Vagina (tissue), 2 donors: ENCODE measurements at regions of chr16 and their contacts with region 1.

Region 1: DNA sequence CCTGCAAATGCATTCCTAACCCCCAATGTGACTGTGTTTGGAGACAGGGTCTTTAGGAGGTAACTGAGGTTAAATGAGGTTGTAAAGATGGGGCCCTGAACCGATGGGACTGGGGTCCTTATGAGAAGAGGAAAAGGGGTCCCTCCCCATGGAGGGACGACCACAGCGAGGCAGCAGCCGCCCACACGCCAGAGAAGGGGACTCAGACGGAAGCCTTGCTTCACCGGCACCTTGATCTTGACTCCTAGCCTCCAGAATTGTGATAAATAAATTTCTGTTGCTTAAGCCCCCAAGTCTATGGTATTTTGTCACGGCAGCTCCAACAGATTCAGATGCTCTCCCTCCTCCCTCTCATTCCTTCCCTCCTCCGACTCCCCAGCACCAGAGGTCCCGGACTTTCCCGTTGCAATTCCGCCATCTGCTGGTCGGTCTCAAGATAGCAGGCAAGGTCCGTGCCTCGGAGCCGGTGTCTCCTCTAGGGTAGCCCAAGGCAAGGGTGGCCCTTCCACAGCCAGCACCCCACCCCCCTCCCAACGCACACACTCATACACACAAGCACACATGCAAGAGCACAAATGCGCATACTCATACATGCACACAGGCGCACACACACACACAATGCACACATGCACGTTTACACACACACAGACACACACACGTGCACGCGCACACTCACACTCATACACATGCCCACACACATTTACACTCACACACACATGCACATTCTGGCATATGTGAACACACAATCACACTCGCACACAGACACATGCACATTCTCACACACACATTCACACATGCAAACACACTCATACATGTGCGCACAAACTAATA is 23.1 kb upstream of the C16orf78 start:
- DNase-seq: no peak
- H3K4me3 ChIP-seq: no peak overlapping the region
- H3K27ac ChIP-seq: no peak overlapping the region
- H3K4me1 ChIP-seq: no peaks in the 10 kb centered on the region
- H3K27me3 ChIP-seq: no peaks in the 10 kb centered on the region
- CTCF ChIP-seq: peak; percentile 51 to 80 (median 78)
- POLR2A ChIP-seq: no peak

Region 2: GRCh38 chr16:48687421-48688038 is 663.0 kb before region 1 on chr16:
- intact Hi-C with region 1: loop called (anchors 10 kb)
- DNase-seq: no peak
- H3K4me3 ChIP-seq: no peak overlapping the region
- H3K27ac ChIP-seq: no peak overlapping the region
- H3K4me1 ChIP-seq: no peaks in the 10 kb centered on the region
- H3K27me3 ChIP-seq: no peaks in the 10 kb centered on the region
- CTCF ChIP-seq: peak in 2 of 3 experiments; percentile 28 to 62
- POLR2A ChIP-seq: no peak

Region 3: GRCh38 chr16:49407873-49408550 is 57.5 kb after region 1 on chr16:
- intact Hi-C with region 1: no loop called
- DNase-seq: peak in 1 of 2 donors; percentile 95
- H3K4me3 ChIP-seq: no peak overlapping the region
- H3K27ac ChIP-seq: no peak overlapping the region
- H3K4me1 ChIP-seq: no peaks in the 10 kb centered on the region
- H3K27me3 ChIP-seq: no peaks in the 10 kb centered on the region
- CTCF ChIP-seq: peak; percentile 59 to 89 (median 79)
- POLR2A ChIP-seq: no peak

Region 4: GRCh38 chr16:49542391-49542891 is 192.0 kb after region 1 on chr16:
- intact Hi-C with region 1: no loop called
- DNase-seq: no peak
- H3K4me3 ChIP-seq: no peak overlapping the region
- H3K27ac ChIP-seq: peak overlapping the region; percentile 55
- H3K4me1 ChIP-seq: peaks cover 36% of the 10 kb centered on the region
- H3K27me3 ChIP-seq: no peaks in the 10 kb centered on the region
- CTCF ChIP-seq: no peak
- POLR2A ChIP-seq: no peak